CD4-positive, alpha-beta memory T cell (primary cell): ENCODE measurements at regions of chr11 and their contacts with region 1.

Region 1: DNA sequence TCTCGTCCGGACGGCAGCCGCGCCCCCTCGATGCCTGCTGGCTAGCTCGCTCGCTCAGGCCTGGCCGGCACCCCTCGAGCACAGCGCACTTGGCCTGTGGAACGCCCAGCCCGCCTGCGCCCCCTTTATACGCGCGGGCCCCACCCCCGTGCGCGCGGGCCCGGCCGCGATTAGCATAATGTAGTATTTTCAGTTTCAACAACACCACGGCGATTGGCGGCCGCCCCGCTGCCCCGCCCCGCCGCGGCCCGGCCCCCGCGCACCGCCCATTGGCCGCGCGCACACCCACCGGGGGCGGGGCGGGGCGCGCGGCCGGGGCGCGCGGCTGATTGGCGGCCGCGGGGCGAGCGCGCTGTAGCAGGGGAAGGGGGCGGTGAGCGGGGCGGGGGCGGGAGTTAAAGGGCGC is at the start of gene CDKN1C:
- DNase-seq: peak; percentile 86 to 88 (median 86)
- H3K4me3 ChIP-seq: peak within 1 kb of the TSS; percentile 61 to 86
- H3K4me3 Mint-ChIP-seq: peak within 1 kb of the TSS; percentile 87 to 97 (median 94)
- H3K27ac ChIP-seq: peak within 1 kb of the TSS; percentile 10
- H3K27ac Mint-ChIP-seq: peak within 1 kb of the TSS; percentile 61 to 93 (median 84)
- H3K4me1 ChIP-seq: peaks cover 17% of the 10 kb centered on the region
- H3K4me1 Mint-ChIP-seq: peaks cover 2 to 28% (median 16%) of the 10 kb centered on the region in 4 donors
- H3K27me3 ChIP-seq: no peaks in the 10 kb centered on the region
- H3K27me3 Mint-ChIP-seq: no peaks in the 10 kb centered on the region
- total RNA-seq, gene CDKN1C: 4.9 to 6.1 TPM

Region 2: DNA sequence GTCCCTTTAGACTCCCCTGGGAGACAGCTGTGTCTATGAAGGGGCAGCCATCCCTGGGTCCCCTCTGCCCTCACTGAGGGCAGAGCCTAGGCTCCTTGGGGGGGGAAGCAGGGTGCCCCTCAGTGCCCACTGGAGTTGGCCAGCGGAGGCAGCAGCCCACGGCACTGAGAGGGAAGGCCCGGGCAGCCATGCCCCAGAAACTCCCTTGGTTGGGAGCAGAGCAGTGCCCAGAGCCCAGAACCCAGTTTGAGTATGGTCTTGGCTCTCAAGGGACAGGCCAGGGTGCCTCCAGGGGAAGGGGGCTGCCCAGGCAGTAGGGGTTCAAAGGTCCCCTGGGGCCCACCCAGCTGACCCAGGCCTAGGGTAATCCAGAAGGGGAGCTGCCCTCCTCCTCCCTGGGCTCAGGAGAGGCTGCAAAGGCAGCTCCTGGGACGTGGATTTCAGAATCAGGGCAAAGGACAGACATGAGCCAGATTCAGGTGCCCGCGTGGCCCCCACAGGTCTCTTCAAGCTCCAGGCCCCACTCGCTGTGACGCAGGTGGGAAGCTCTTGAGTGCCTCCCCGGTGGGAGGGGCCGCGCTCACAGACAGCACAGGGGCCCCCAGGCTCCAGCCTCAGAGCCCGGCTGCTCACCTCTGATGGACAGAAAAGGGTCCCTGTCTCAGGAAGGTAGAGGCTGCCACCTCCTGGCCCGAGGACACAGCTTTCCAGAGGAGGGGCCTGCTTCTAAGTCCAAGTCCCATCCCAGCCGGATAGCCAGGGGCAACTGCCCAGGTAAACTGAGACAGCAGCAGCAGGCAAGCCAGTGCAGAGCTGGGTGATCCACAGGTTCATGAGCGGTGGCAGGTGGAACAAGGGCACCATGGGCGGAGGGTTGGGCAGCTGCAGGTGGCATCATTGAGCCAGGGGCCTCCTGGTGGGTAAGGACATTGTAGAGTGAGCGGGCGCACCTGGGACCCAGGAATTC is 586.6 kb before region 1 on chr11:
- CTCF ChIA-PET with region 1: no interaction called
- POLR2A ChIA-PET with region 1: no interaction called
- intact Hi-C with region 1: loop called (anchors 5 kb)
- DNase-seq: peak in 1 of 5 donors; percentile 12
- H3K4me3 ChIP-seq: no peak overlapping the region
- H3K4me3 Mint-ChIP-seq: peak overlapping the region in 6 of 8 donors; percentile 27 to 83 (median 66)
- H3K27ac ChIP-seq: no peak overlapping the region
- H3K27ac Mint-ChIP-seq: peak overlapping the region; percentile 22 to 86 (median 78)
- H3K4me1 ChIP-seq: peaks cover 61% of the 10 kb centered on the region
- H3K4me1 Mint-ChIP-seq: peaks cover 20 to 69% (median 33%) of the 10 kb centered on the region in 4 donors
- H3K27me3 ChIP-seq: no peaks in the 10 kb centered on the region
- H3K27me3 Mint-ChIP-seq: no peaks in the 10 kb centered on the region

Region 3: DNA sequence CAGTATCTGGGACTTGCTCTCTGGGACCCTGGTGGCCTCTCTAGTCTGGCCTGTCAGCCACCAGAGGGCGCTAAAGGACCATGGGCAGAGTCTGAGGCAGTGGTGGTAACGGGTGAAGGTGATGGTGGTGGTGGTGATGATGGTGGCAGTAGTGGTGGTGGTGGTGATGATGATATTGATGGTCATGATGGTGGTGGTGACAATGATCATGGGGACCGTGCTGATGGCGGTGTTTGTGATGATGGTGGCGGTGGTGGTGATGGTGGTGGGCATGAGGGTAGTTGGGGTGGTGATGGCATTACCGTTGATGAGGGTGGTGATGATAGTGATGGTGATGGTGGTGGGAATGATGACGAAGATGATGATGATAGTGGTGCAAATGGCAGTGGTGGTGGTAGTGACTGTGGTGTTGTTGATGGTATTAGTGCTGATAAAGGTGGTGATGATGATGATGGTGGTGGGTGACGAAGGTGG is 457.3 kb before region 1 on chr11:
- CTCF ChIA-PET with region 1: interaction called, 13 read pairs
- POLR2A ChIA-PET with region 1: no interaction called
- intact Hi-C with region 1: loop called (anchors 2 kb)
- DNase-seq: peak; percentile 77 to 83 (median 80)
- H3K4me3 ChIP-seq: no peak overlapping the region
- H3K4me3 Mint-ChIP-seq: no peak overlapping the region
- H3K27ac ChIP-seq: no peak overlapping the region
- H3K27ac Mint-ChIP-seq: no peak overlapping the region
- H3K4me1 ChIP-seq: no peaks in the 10 kb centered on the region
- H3K4me1 Mint-ChIP-seq: no peaks in the 10 kb centered on the region
- H3K27me3 ChIP-seq: no peaks in the 10 kb centered on the region
- H3K27me3 Mint-ChIP-seq: no peaks in the 10 kb centered on the region

Region 4: DNA sequence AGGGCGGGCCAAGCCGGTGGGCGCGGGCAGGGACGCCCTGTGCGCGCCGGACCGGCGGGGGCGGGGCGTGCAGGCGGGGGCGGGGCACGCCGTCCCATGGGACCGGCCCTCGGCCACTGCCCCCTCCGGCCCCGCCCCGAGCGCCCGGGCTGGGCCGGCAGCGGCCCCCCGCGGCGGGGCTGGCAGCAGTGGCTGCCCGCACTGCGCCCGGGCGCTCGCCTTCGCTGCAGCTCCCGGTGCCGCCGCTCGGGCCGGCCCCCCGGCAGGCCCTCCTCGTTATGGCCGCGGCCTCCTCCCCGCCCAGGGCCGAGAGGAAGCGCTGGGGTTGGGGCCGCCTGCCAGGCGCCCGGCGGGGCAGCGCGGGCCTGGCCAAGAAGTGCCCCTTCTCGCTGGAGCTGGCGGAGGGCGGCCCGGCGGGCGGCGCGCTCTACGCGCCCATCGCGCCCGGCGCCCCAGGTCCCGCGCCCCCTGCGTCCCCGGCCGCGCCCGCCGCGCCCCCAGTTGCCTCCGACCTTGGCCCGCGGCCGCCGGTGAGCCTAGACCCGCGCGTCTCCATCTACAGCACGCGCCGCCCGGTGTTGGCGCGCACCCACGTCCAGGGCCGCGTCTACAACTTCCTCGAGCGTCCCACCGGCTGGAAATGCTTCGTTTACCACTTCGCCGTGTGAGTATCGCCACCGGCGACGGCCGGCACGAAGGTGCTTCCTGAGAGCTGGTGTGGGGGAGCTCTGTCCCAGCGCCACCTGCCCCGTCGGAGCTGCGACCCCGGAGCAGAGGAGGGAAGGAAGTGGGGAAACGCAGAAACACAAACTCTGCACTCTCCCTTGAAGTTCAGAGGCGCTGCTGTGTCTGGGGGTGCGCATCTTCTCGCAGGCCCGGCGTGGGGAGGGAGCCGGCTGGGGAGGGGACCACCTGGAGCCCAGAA is 440.6 kb before region 1 on chr11 and contains the start of gene KCNQ1:
- CTCF ChIA-PET with region 1: interaction called, 5 read pairs
- POLR2A ChIA-PET with region 1: interaction called, 3 read pairs
- intact Hi-C with region 1: loop called (anchors 1 kb)
- DNase-seq: peak in 4 of 5 donors; percentile 32 to 38 (median 35)
- H3K4me3 ChIP-seq: peak within 1 kb of the TSS; percentile 6 to 68
- H3K4me3 Mint-ChIP-seq: peak within 1 kb of the TSS; percentile 92 to 97 (median 94)
- H3K27ac ChIP-seq: peak within 1 kb of the TSS; percentile 15
- H3K27ac Mint-ChIP-seq: peak within 1 kb of the TSS; percentile 72 to 85 (median 84)
- H3K4me1 ChIP-seq: peaks cover 57% of the 10 kb centered on the region
- H3K4me1 Mint-ChIP-seq: peaks cover 28 to 57% (median 41%) of the 10 kb centered on the region in 4 donors
- H3K27me3 ChIP-seq: no peaks in the 10 kb centered on the region
- H3K27me3 Mint-ChIP-seq: no peaks in the 10 kb centered on the region
- total RNA-seq, gene KCNQ1: 21.4 to 21.6 TPM

Region 5: DNA sequence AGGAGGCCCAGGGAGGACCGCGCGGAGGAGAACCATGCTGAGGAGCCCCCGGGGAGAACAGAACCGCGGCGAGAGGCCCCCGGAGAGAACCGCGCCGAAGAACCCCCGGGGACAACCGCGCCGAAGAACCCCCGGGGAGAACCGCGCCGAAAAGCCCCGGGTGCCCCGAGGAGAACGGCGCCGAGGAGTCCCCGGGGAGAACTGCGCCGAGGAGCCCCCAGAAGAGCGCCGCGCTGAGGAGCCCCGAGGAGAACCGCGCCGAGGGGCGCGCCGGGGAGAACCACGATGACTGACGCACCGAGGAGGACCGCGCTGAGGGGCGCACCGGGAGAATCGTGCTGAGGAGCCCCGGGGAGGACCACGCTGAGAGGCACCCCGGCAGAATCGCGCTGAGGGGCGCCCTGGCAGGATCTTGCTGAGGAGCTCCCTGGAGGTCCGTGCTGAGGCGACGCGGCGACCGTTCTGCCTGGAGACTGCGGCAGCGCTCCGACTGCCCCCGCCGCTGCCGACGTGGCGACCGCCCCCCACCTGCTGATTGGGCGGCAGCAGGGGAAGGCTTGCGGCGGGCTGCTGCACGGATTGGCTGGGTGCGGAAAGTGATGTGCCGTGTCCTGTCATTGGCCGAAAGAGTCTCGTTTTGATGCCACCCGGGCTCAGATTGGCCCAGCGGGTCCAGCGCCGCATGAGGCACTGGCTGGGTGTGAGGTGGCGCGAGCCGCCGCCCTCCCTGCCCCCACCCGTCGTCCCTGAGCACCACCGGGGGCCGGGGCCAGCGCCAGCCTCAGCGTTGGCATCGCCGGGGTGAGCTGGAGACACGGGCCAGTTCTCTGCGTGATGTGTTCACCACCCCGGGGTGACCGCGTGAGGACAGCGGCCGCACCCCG is 185.9 kb before region 1 on chr11 and contains the start of gene KCNQ1OT1:
- CTCF ChIA-PET with region 1: interaction called, 3 read pairs
- POLR2A ChIA-PET with region 1: no interaction called
- intact Hi-C with region 1: loop called (anchors 5 kb)
- DNase-seq: peak; percentile 86 to 90 (median 89)
- H3K4me3 ChIP-seq: peak within 1 kb of the TSS; percentile 23 to 70
- H3K4me3 Mint-ChIP-seq: peak within 1 kb of the TSS; percentile 72 to 85 (median 80)
- H3K27ac ChIP-seq: peak within 1 kb of the TSS; percentile 53
- H3K27ac Mint-ChIP-seq: peak within 1 kb of the TSS in 5 of 7 donors; percentile 29 to 79 (median 50)
- H3K4me1 ChIP-seq: peaks cover 4% of the 10 kb centered on the region
- H3K4me1 Mint-ChIP-seq: peaks cover 2 to 13% (median 4%) of the 10 kb centered on the region in 4 donors
- H3K27me3 ChIP-seq: no peaks in the 10 kb centered on the region
- H3K27me3 Mint-ChIP-seq: no peaks in the 10 kb centered on the region
- total RNA-seq, gene KCNQ1OT1: 0.36 to 0.38 TPM

Region 6: GRCh38 chr11:2860636-2861035 is 25.0 kb before region 1 on chr11:
- CTCF ChIA-PET with region 1: no interaction called
- POLR2A ChIA-PET with region 1: no interaction called
- intact Hi-C with region 1: no loop called
- DNase-seq: no peak
- H3K4me3 ChIP-seq: no peak overlapping the region
- H3K4me3 Mint-ChIP-seq: no peak overlapping the region
- H3K27ac ChIP-seq: no peak overlapping the region
- H3K27ac Mint-ChIP-seq: no peak overlapping the region
- H3K4me1 ChIP-seq: no peaks in the 10 kb centered on the region
- H3K4me1 Mint-ChIP-seq: no peaks in the 10 kb centered on the region
- H3K27me3 ChIP-seq: peaks cover 10% of the 10 kb centered on the region
- H3K27me3 Mint-ChIP-seq: peaks cover 11 to 24% of the 10 kb centered on the region in 2 donors

Region 7: DNA sequence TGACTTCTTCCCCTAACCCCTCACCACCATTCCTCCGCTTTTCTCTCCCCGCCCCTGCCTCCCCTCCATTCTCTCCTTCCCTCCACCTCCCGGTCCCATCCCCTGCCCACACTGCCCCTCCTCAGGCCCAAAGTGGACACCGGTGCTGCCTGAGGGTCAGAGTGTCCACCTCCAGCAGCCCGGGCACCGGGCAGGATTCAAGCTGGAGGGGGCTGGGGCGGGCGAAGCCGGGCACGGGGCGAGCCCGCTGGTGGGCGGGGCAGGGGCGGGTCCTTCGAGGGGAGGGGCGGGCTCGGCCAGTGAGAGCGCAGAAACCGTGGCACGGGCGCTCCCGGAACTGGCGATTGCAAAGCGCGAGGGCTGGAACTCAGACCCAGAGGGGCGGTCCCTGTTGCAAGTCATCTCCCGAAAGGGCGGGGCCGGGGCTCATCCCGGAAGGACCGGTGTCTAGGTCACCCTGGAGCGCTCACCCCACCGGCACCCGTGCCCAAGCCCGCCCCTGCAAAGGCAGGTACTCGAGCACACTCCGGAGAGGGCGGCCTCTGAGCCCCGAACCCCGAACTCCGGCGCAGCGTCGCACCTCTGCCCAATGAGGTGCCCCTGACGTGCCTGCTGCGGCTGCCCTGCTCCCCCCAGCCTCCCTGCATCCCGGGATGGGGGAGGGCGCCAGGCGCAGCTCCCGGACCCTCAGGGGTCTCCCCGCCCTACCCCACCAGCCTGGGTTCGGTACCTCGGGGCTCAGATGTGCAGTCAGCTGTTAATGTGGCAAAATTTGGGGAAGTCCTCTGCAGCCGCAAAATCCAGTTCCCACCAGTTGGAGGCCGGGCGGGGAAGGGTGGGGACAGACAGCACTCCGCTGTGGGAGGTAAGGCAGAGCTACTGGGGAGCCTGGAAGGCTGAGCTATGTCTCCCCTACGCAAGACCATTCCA is 16.4 kb after region 1 on chr11:
- CTCF ChIA-PET with region 1: interaction called, 20 read pairs
- POLR2A ChIA-PET with region 1: interaction called, 32 read pairs
- intact Hi-C with region 1: loop called (anchors 1 kb)
- DNase-seq: peak; percentile 81 to 92 (median 84)
- H3K4me3 ChIP-seq: peak overlapping the region; percentile 28 to 67
- H3K4me3 Mint-ChIP-seq: peak overlapping the region; percentile 73 to 86 (median 79)
- H3K27ac ChIP-seq: peak overlapping the region; percentile 65
- H3K27ac Mint-ChIP-seq: peak overlapping the region; percentile 29 to 90 (median 72)
- H3K4me1 ChIP-seq: peaks cover 49% of the 10 kb centered on the region
- H3K4me1 Mint-ChIP-seq: peaks cover 34 to 66% (median 48%) of the 10 kb centered on the region in 4 donors
- H3K27me3 ChIP-seq: no peaks in the 10 kb centered on the region
- H3K27me3 Mint-ChIP-seq: no peaks in the 10 kb centered on the region

Region 8: GRCh38 chr11:3057069-3057963 is 171.6 kb after region 1 on chr11 and contains the start of gene CARS1:
- CTCF ChIA-PET with region 1: no interaction called
- POLR2A ChIA-PET with region 1: no interaction called
- intact Hi-C with region 1: loop called (anchors 1 kb)
- DNase-seq: peak; percentile 89 to 93 (median 90)
- H3K4me3 ChIP-seq: peak within 1 kb of the TSS; percentile 58 to 85
- H3K4me3 Mint-ChIP-seq: peak within 1 kb of the TSS; percentile 86 to 93 (median 88)
- H3K27ac ChIP-seq: peak within 1 kb of the TSS; percentile 96
- H3K27ac Mint-ChIP-seq: peak within 1 kb of the TSS; percentile 81 to 93 (median 90)
- H3K4me1 ChIP-seq: peaks cover 32% of the 10 kb centered on the region
- H3K4me1 Mint-ChIP-seq: peaks cover 20 to 45% (median 35%) of the 10 kb centered on the region in 4 donors
- H3K27me3 ChIP-seq: no peaks in the 10 kb centered on the region
- H3K27me3 Mint-ChIP-seq: peaks cover 0 to 3% of the 10 kb centered on the region in 2 donors
- total RNA-seq, gene CARS1: 71.0 to 80.3 TPM

Region 9: GRCh38 chr11:3107608-3108182 is 222.0 kb after region 1 on chr11:
- CTCF ChIA-PET with region 1: no interaction called
- POLR2A ChIA-PET with region 1: no interaction called
- intact Hi-C with region 1: no loop called
- DNase-seq: no peak
- H3K4me3 ChIP-seq: no peak overlapping the region
- H3K4me3 Mint-ChIP-seq: no peak overlapping the region
- H3K27ac ChIP-seq: no peak overlapping the region
- H3K27ac Mint-ChIP-seq: no peak overlapping the region
- H3K4me1 ChIP-seq: no peaks in the 10 kb centered on the region
- H3K4me1 Mint-ChIP-seq: no peaks in the 10 kb centered on the region
- H3K27me3 ChIP-seq: no peaks in the 10 kb centered on the region
- H3K27me3 Mint-ChIP-seq: no peaks in the 10 kb centered on the region